ENCODE measurements at regions of chr3 and their contacts with region 1.

Region 1: GRCh38 chr3:122305818-122306621 is 19.0 kb upstream of the CSTA start:
- DNase-seq: peak; percentile 52
- H3K4me3 Mint-ChIP-seq: no peak overlapping the region
- H3K27ac Mint-ChIP-seq: no peak overlapping the region
- H3K4me1 Mint-ChIP-seq: no peaks in the 10 kb centered on the region
- H3K27me3 Mint-ChIP-seq: no peaks in the 10 kb centered on the region
- CTCF ChIP-seq: peak; percentile 38

Region 2: GRCh38 chr3:122245513-122246174 is 60.4 kb before region 1 on chr3:
- CTCF ChIA-PET with region 1: no interaction called
- POLR2A ChIA-PET with region 1: no interaction called
- intact Hi-C with region 1: no loop called
- DNase-seq: peak; percentile 13
- H3K4me3 Mint-ChIP-seq: no peak overlapping the region
- H3K27ac Mint-ChIP-seq: peak overlapping the region; percentile 6
- H3K4me1 Mint-ChIP-seq: no peaks in the 10 kb centered on the region
- H3K27me3 Mint-ChIP-seq: peaks cover 33% of the 10 kb centered on the region
- CTCF ChIP-seq: peak; percentile 19

Region 3: GRCh38 chr3:122338400-122338799 is 32.4 kb after region 1 on chr3:
- CTCF ChIA-PET with region 1: interaction called, 19 read pairs
- POLR2A ChIA-PET with region 1: interaction called, 6 read pairs
- intact Hi-C with region 1: no loop called
- DNase-seq: no peak
- H3K4me3 Mint-ChIP-seq: no peak overlapping the region
- H3K27ac Mint-ChIP-seq: no peak overlapping the region
- H3K4me1 Mint-ChIP-seq: peaks cover 5% of the 10 kb centered on the region
- H3K27me3 Mint-ChIP-seq: no peaks in the 10 kb centered on the region
- CTCF ChIP-seq: no peak

Region 4: DNA sequence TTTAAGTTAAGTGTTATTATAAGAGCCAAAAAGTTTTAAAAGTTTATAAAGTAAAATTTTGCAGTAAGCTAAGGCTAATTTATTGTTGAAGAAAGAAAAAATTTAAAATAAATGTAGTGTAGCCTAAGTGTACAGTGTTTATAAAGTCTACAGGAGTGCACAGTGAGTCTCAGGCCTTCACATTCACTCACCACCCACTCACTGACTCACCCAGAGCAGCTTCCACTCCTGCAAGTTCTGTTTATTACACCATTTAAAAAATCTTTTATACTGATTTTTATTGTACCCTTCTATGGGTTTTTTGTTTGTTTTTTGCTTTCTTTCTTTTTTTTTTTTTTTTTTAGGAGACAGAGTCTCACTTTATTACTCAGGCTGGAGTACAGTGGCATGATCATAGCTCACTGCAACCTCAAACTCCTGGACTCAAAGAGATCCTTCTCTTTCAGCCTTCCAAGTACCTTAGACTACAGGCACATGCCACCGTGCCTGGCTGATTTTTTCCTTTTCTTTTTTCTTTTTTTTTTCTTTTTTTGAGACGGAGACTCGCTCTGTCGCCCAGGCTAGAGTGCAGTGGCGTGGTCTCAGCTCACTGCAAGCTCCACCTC is 44.9 kb after region 1 on chr3:
- CTCF ChIA-PET with region 1: interaction called, 165 read pairs
- POLR2A ChIA-PET with region 1: interaction called, 89 read pairs
- intact Hi-C with region 1: loop called (anchors 1 kb)
- DNase-seq: peak; percentile 53
- H3K4me3 Mint-ChIP-seq: no peak overlapping the region
- H3K27ac Mint-ChIP-seq: peak overlapping the region; percentile 70
- H3K4me1 Mint-ChIP-seq: peaks cover 26% of the 10 kb centered on the region
- H3K27me3 Mint-ChIP-seq: no peaks in the 10 kb centered on the region
- CTCF ChIP-seq: no peak

Region 5: GRCh38 chr3:122365073-122365472 is 59.1 kb after region 1 on chr3:
- CTCF ChIA-PET with region 1: interaction called, 16 read pairs
- POLR2A ChIA-PET with region 1: interaction called, 4 read pairs
- intact Hi-C with region 1: no loop called
- DNase-seq: no peak
- H3K4me3 Mint-ChIP-seq: no peak overlapping the region
- H3K27ac Mint-ChIP-seq: no peak overlapping the region
- H3K4me1 Mint-ChIP-seq: no peaks in the 10 kb centered on the region
- H3K27me3 Mint-ChIP-seq: no peaks in the 10 kb centered on the region
- CTCF ChIP-seq: no peak

Region 6: DNA sequence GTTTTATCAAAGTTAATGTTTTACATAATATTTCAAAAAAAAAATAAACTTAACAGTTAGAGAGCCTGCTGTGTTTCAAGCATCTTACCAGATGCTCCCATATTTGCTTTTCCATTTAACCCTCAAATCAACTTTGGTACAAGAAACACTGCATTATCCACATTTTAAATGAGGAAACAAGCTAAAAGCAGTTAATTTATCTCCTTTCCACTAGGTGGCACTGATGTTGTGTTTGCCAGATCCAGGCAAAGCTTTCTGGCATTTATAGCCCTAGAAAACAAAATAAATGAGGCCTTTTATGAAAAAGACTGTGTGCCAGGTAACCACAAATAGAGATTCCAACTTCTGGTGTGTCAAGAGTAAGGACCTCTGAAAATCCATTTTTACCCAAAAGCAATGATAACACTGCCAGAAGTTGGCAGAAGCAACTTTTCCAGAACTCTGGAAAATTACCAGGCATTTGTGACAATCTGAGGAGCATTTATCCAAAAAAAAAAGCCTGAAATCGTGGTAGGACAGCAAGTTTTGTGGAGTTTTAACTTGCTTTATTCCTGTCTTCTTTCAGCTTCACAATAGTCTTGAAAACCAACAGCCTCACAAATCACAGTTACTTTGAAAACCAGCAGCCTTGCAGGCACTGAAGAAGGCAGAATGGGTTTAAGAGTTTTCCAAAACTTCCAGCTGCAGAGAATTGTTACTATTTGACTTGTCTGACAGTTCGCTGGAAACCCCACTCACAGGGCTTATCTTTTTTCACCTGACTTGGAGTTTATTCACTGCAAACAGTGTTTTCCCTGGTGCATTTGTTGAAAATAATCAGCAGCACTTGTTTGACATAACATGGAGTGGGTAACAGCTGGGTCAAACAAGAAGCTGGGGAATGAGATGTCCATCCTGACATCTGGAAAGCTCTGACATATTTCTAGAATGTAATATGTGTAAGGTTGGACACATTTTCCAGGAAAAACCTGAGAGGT is 87.1 kb after region 1 on chr3:
- CTCF ChIA-PET with region 1: interaction called, 16 read pairs
- POLR2A ChIA-PET with region 1: interaction called, 4 read pairs
- intact Hi-C with region 1: no loop called
- DNase-seq: peak; percentile 56
- H3K4me3 Mint-ChIP-seq: no peak overlapping the region
- H3K27ac Mint-ChIP-seq: peak overlapping the region; percentile 89
- H3K4me1 Mint-ChIP-seq: peaks cover 25% of the 10 kb centered on the region
- H3K27me3 Mint-ChIP-seq: no peaks in the 10 kb centered on the region
- CTCF ChIP-seq: peak; percentile 67